CD8-positive, alpha-beta T cell (primary cell): ENCODE measurements at regions of chr14 and their contacts with region 1.

Region 1: DNA sequence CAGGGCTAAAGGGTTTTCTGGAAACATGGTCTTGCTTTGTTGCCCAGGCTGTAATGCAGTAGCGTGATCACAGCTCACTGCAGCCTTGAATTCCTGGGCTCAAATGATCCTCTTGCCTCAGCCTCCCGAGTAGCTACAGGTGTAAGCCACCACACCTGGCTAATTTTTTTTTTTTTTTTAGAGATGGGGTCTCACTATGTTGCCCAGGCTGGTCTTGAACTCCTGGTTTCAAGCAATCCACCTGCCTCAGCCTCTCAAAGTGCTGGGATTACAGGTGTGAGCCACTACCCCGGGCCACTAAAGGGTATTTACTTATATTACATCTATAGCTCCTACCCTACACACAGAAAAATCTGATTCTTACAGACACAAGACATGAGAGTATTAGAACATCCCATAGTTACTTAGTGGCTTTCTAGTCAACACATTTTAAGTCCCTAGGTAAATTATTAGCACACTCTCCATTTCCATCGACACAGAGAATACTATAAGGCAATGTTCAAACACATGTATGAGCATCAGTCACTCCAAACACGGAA is 6.2 kb upstream of the DCAF11 start:
- DNase-seq: no peak
- ATAC-seq: peak; percentile 25
- H3K4me3 ChIP-seq: no peak overlapping the region
- H3K4me3 Mint-ChIP-seq: no peak overlapping the region
- H3K27ac ChIP-seq: peak overlapping the region; percentile 44 to 80
- H3K27ac Mint-ChIP-seq: peak overlapping the region; percentile 95
- H3K4me1 ChIP-seq: peaks cover 16% of the 10 kb centered on the region
- H3K4me1 Mint-ChIP-seq: peaks cover 12% of the 10 kb centered on the region
- H3K27me3 ChIP-seq: no peaks in the 10 kb centered on the region
- H3K27me3 Mint-ChIP-seq: no peaks in the 10 kb centered on the region
- CTCF ChIP-seq: no peak

Region 2: DNA sequence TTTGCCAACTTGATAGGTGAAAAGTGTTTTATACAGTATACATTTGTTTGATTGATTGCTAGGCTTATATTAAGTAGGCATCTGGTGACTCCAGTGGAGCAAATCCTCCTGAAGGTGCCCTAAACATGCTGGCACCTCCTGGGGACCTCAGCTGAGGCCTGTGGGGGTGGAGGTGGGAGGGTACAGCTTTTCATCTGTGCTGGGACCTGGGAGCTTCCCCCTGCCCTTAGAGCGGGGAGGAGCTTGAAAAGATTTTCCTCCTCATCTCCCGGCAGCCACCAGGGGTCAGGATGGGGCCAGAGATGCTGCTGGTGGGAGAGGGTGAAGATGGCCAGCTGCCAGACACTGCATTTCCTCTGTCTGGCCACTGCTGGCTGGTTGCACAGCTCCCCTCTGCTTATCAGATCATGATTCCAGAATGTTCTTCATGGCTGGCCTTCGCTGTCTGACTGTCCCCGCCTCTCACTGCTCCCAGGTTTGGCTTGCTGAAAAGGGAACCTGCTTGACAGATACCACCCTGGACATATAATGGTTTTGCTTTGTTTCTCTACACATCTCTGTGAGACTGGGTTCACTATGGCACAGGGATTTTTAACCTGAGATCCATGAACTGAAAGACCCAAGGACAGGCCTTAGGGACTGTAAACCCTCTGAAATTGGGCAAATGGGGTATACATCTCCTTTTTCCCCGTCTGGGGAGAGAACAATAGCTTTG is 519.4 kb before region 1 on chr14:
- CTCF ChIA-PET with region 1: no interaction called
- POLR2A ChIA-PET with region 1: no interaction called
- intact Hi-C with region 1: loop called in 1 of 2 experiments (anchors 10 kb)
- DNase-seq: peak; percentile 65 to 90 (median 83)
- ATAC-seq: peak; percentile 94
- H3K4me3 ChIP-seq: no peak overlapping the region
- H3K4me3 Mint-ChIP-seq: no peak overlapping the region
- H3K27ac ChIP-seq: no peak overlapping the region
- H3K27ac Mint-ChIP-seq: no peak overlapping the region
- H3K4me1 ChIP-seq: peaks cover 9% of the 10 kb centered on the region
- H3K4me1 Mint-ChIP-seq: peaks cover 11% of the 10 kb centered on the region
- H3K27me3 ChIP-seq: no peaks in the 10 kb centered on the region
- H3K27me3 Mint-ChIP-seq: peaks cover 16% of the 10 kb centered on the region
- CTCF ChIP-seq: peak; percentile 65

Region 3: DNA sequence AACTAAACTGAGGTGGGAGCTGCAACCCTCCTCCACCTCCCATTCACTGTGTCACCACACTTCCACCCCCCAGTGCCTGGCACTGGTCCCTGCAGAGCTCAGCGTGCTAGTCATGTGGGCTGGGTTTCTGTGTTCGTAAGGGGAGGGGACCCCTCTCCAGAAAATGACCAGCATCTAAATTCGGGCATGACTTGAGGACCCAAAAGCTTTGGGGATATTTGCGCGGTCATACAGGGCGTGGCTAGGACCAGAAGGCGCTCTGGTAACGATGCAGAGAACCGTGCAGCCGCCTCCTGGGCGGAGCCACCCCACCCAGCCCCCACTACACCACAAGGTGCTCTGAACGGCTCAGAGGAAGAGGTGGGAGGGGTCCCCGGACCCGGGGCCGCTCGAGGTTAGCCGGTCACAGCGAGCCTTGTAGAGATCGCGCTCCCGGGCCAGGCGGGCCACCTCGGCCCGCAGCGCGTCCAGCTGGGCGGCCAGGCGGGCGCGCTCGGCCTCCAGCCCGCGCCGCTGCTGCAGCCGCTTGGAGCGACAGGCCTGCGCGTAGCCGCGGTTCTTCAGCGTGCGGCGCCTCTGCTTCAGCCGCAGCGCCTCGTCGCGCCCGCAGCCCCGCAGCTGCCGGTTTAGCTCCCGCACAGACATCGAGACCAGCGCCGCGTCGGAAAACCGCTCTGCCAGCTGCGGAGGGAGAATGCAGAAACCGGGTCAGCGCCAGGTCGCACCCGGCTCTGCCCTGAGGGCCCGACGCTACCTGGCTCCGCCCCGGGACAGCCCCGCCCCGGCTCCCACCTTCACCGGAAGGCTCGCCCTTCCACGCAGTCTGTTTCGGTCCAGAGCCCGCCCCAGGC is 27.3 kb before region 1 on chr14:
- CTCF ChIA-PET with region 1: interaction called, 46 read pairs
- POLR2A ChIA-PET with region 1: interaction called, 30 read pairs
- intact Hi-C with region 1: no loop called
- DNase-seq: peak; percentile 46 to 83 (median 68)
- ATAC-seq: peak; percentile 89
- H3K4me3 ChIP-seq: peak overlapping the region; percentile 48 to 68
- H3K4me3 Mint-ChIP-seq: peak overlapping the region; percentile 87
- H3K27ac ChIP-seq: peak overlapping the region in 1 of 2 experiments; percentile 72
- H3K27ac Mint-ChIP-seq: peak overlapping the region; percentile 88
- H3K4me1 ChIP-seq: peaks cover 14% of the 10 kb centered on the region
- H3K4me1 Mint-ChIP-seq: peaks cover 21% of the 10 kb centered on the region
- H3K27me3 ChIP-seq: no peaks in the 10 kb centered on the region
- H3K27me3 Mint-ChIP-seq: no peaks in the 10 kb centered on the region
- CTCF ChIP-seq: no peak

Region 4: GRCh38 chr14:24093901-24094761 is 14.3 kb before region 1 on chr14 and contains the start of gene PCK2:
- CTCF ChIA-PET with region 1: interaction called, 217 read pairs
- POLR2A ChIA-PET with region 1: interaction called, 12 read pairs
- intact Hi-C with region 1: loop called (anchors 1 to 2 kb)
- DNase-seq: peak; percentile 39 to 82 (median 68)
- ATAC-seq: peak; percentile 79
- H3K4me3 ChIP-seq: peak within 1 kb of the TSS; percentile 69 to 99
- H3K4me3 Mint-ChIP-seq: peak within 1 kb of the TSS; percentile 98
- H3K27ac ChIP-seq: peak within 1 kb of the TSS; percentile 69 to 76
- H3K27ac Mint-ChIP-seq: peak within 1 kb of the TSS; percentile 98
- H3K4me1 ChIP-seq: peaks cover 19% of the 10 kb centered on the region
- H3K4me1 Mint-ChIP-seq: peaks cover 37% of the 10 kb centered on the region
- H3K27me3 ChIP-seq: no peaks in the 10 kb centered on the region
- H3K27me3 Mint-ChIP-seq: no peaks in the 10 kb centered on the region
- CTCF ChIP-seq: no peak
- total RNA-seq, gene PCK2: 4.9 to 5.2 TPM

Region 5: GRCh38 chr14:24146978-24147760 is 38.8 kb after region 1 on chr14 and contains the start of gene RNF31:
- CTCF ChIA-PET with region 1: interaction called, 15 read pairs
- POLR2A ChIA-PET with region 1: interaction called, 47 read pairs
- intact Hi-C with region 1: no loop called
- DNase-seq: peak; percentile 93 to 99 (median 97)
- ATAC-seq: peak; percentile 89
- H3K4me3 ChIP-seq: peak within 1 kb of the TSS; percentile 96 to 99
- H3K4me3 Mint-ChIP-seq: peak within 1 kb of the TSS; percentile 95
- H3K27ac ChIP-seq: peak within 1 kb of the TSS; percentile 79 to 91
- H3K27ac Mint-ChIP-seq: peak within 1 kb of the TSS; percentile 93
- H3K4me1 ChIP-seq: peaks cover 34% of the 10 kb centered on the region
- H3K4me1 Mint-ChIP-seq: peaks cover 53% of the 10 kb centered on the region
- H3K27me3 ChIP-seq: no peaks in the 10 kb centered on the region
- H3K27me3 Mint-ChIP-seq: no peaks in the 10 kb centered on the region
- CTCF ChIP-seq: no peak
- total RNA-seq, gene RNF31: 45.4 to 51.7 TPM